Dendritic cell treated with granulocyte-macrophage colony-stimulating factor and Interleukin-4, amounts not matched to agents 40 ng/mL and 50 ng/mL, for 4 days (primary cell): ENCODE measurements at regions of chrX and their contacts with region 1.

Region 1: GRCh38 chrX:22192417-22193060 is 80.2 kb upstream of the CBLL2 start:
- H3K4me3 Mint-ChIP-seq: no peak overlapping the region
- H3K27ac Mint-ChIP-seq: no peak overlapping the region
- H3K4me1 Mint-ChIP-seq: peaks cover 5% of the 10 kb centered on the region
- H3K27me3 Mint-ChIP-seq: peaks cover 3% of the 10 kb centered on the region

Region 2: DNA sequence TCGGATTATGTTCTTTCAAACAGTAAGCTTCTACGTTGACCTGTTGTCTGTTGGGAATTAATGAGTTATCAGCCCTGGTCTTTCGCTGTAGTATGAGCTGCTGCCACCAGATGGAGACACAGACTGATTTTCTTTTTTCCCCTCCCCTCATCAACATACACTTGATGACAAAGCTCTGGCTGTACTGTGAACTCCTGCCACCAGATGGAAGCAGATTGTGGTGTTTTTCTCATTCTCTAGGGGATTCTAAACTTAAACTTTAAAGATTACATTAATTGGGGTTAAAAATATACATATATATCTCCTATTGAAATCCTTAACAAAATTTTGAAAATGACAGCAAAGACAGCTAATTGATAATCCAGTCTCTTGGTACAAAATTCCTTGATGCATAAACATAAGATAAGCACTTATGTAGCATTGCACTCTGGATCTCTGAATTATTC is 207.2 kb before region 1 on chrX:
- intact Hi-C with region 1: loop called (anchors 2 kb)
- H3K4me3 Mint-ChIP-seq: no peak overlapping the region
- H3K27ac Mint-ChIP-seq: no peak overlapping the region
- H3K4me1 Mint-ChIP-seq: peaks cover 7% of the 10 kb centered on the region
- H3K27me3 Mint-ChIP-seq: no peaks in the 10 kb centered on the region

Region 3: DNA sequence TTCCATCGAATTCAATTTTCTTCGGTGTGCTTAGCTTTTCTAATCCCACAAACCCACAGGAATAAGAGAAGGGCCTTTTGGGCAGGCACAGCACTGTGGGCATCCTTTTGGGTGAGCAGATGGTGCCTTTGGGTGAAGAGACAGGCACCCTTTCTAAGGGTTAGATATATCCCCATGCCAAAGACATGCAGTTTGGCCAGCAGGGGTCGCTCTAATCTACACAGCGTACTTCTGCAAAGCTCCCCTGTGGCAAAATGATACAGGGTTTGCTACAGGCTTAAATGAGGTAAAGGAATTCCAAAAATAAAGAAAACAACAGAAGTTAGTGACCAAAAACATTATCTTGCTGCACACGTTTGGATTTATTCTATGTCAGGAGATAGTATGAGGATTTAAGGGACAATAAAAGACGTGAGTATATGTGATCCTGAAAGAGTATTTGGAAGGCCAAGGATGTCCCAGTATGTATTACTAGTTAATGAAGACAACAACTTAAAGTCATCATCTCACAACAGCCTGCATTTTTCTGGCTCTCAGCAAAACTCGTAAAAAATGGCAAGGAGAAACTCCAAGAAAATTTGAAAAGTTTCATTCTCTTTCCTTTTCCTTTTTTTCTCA is 111.0 kb before region 1 on chrX:
- intact Hi-C with region 1: no loop called
- H3K4me3 Mint-ChIP-seq: no peak overlapping the region
- H3K27ac Mint-ChIP-seq: no peak overlapping the region
- H3K4me1 Mint-ChIP-seq: no peaks in the 10 kb centered on the region
- H3K27me3 Mint-ChIP-seq: no peaks in the 10 kb centered on the region

Region 4: DNA sequence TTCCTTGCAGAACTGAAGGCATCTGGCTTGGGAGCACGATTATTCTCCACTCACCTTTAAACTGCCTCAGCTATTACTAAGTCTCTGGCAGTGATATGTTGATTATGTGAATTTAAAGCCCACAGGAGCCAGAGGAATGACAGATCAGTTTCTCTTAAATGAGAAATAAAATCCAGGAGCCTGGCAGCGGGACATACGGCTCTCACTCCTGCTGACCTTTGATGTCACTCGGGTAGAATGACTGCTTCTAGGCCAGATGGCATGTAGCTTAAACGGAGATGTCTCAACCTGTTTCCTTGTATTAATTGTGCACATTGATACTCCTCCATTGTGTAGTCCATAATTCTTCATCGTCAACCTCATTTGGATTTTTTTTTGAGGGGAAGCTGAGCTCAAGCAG is 76.2 kb after region 1 on chrX:
- intact Hi-C with region 1: no loop called
- H3K4me3 Mint-ChIP-seq: no peak overlapping the region
- H3K27ac Mint-ChIP-seq: no peak overlapping the region
- H3K4me1 Mint-ChIP-seq: no peaks in the 10 kb centered on the region
- H3K27me3 Mint-ChIP-seq: no peaks in the 10 kb centered on the region

Region 5: DNA sequence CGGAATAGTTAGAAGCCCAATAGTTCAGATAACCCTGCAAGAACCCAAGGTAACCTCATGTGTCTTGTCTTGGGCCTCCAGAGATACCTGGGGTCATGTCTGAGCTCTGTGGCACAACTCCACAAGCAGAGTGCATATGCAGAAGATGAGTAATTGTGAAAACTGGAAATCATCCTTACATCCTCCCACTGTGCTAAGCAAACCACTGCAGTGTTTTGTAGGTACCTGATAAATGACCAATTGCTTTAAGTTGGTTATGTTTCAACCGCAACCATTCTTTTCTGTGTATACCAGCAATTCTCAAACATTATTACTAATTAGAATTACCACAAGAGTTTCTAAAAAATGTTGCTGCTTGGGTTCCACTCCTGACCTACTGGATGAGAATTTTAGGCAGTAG is 153.3 kb after region 1 on chrX:
- intact Hi-C with region 1: no loop called
- H3K4me3 Mint-ChIP-seq: no peak overlapping the region
- H3K27ac Mint-ChIP-seq: no peak overlapping the region
- H3K4me1 Mint-ChIP-seq: no peaks in the 10 kb centered on the region
- H3K27me3 Mint-ChIP-seq: no peaks in the 10 kb centered on the region